Activated naive CD4-positive, alpha-beta T cell treated with anti-CD3 and anti-CD28 coated beads for 36 hours (primary cell): ENCODE measurements at regions of chr3 and their contacts with region 1.

Region 1: DNA sequence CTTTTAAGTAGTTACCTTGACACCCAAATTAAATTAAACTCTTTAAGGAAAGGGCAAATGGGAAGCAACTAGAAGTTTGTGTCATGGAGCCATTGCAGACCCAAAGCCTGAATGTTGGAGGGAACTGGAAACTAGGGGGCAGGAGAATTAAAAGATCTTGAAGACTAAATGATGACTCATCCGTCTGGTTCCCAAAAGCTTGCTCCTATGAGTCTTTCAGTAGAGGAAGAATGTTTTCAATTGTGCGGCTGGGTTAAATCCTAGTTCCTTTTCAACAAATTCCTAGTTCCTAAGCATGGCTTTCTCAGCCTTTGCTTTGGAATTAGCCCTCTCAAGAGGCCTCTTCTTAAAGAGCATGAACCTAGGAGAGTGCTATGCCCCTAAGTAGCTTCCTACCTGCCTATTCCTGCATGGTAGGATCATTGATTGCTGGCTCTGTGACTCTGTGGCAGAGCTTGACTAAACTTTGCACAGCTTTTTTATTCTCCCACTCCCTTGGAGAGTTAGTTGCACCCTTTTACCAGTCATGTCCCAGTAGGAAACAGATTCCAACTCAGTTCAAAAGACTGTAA is 17.7 kb downstream of the CLEC3B start:
- DNase-seq: no peak
- H3K4me3 Mint-ChIP-seq: no peak overlapping the region
- H3K27ac Mint-ChIP-seq: no peak overlapping the region
- H3K4me1 Mint-ChIP-seq: peaks cover 20% of the 10 kb centered on the region
- H3K27me3 Mint-ChIP-seq: peaks cover 6% of the 10 kb centered on the region

Region 2: GRCh38 chr3:44761424-44762169 is 282.2 kb before region 1 on chr3 and contains the starts of genes KIAA1143 and KIF15:
- CTCF ChIA-PET with region 1: no interaction called
- intact Hi-C with region 1: no loop called
- DNase-seq: peak; percentile 99
- H3K4me3 Mint-ChIP-seq: peak within 1 kb of the TSS; percentile 94
- H3K27ac Mint-ChIP-seq: peak within 1 kb of the TSS; percentile 86
- H3K4me1 Mint-ChIP-seq: peaks cover 26% of the 10 kb centered on the region
- H3K27me3 Mint-ChIP-seq: no peaks in the 10 kb centered on the region
- total RNA-seq, gene KIAA1143: 29.1 to 35.9 TPM
- total RNA-seq, gene KIF15: 42.1 to 45.8 TPM

Region 3: GRCh38 chr3:44772099-44772442 is 271.7 kb before region 1 on chr3:
- CTCF ChIA-PET with region 1: no interaction called
- intact Hi-C with region 1: no loop called
- DNase-seq: no peak
- H3K4me3 Mint-ChIP-seq: no peak overlapping the region
- H3K27ac Mint-ChIP-seq: no peak overlapping the region
- H3K4me1 Mint-ChIP-seq: no peaks in the 10 kb centered on the region
- H3K27me3 Mint-ChIP-seq: peaks cover 3% of the 10 kb centered on the region

Region 4: DNA sequence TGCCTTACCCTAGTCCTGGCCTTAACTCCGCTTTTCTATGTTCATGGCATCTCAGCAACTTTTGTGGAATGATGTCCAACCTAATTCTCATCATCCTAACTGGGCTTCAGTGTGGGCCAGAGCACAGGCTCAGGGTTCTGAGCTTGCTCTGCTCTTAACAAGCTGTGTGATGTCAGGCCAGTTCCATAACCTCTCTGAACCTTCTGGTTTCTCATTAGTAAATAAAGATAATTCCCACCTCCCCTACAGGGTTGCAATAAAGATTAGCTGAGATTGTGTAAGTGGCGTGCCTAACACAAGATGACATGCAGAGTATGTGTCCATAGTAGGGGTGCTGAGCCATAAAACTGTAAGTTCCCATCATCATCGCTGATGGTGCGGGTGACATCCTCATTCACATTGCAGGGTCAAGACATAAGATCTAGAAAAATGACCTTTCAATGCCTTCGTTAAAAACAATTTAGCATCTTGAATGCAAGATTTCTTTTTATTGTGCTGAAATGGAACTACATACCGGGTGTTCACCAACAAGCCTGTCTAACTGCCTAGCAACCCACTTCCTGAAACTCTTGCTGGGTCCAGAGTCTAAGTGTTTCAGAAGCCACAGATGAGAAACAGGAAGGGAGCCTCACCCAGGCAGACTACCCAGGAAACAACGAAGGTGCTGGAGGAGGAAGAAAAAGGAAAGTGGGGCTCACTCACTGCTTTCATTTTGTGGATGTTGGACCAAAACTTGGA is 66.1 kb after region 1 on chr3:
- CTCF ChIA-PET with region 1: interaction called, 8 read pairs
- intact Hi-C with region 1: loop called (anchors 5 kb)
- DNase-seq: peak; percentile 56
- H3K4me3 Mint-ChIP-seq: peak overlapping the region; percentile 47
- H3K27ac Mint-ChIP-seq: no peak overlapping the region
- H3K4me1 Mint-ChIP-seq: peaks cover 70% of the 10 kb centered on the region
- H3K27me3 Mint-ChIP-seq: no peaks in the 10 kb centered on the region

Region 5: DNA sequence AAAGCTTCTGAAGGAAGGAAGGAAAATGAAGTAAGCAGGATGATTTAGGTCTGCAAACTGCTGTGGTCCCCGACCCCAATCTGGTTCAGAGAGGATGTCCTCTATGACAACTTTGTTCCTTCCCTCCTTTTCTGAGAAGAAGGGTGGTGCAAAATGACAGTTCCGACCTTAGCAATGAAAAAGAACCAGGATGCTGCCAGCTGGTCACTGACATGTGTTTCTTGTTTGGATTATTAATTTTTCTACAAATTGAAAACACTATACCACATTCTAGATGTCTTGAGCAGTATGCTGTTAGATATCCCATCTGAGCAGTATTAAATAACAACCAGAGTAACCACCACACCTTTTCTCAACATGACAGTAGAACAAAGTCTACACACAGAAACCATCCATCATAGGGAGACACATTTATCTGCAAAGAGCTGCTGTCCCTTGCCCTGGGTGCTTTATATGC is 74.8 kb after region 1 on chr3:
- CTCF ChIA-PET with region 1: interaction called, 11 read pairs
- intact Hi-C with region 1: loop called (anchors 5 kb)
- DNase-seq: no peak
- H3K4me3 Mint-ChIP-seq: no peak overlapping the region
- H3K27ac Mint-ChIP-seq: no peak overlapping the region
- H3K4me1 Mint-ChIP-seq: peaks cover 28% of the 10 kb centered on the region
- H3K27me3 Mint-ChIP-seq: no peaks in the 10 kb centered on the region

Region 6: DNA sequence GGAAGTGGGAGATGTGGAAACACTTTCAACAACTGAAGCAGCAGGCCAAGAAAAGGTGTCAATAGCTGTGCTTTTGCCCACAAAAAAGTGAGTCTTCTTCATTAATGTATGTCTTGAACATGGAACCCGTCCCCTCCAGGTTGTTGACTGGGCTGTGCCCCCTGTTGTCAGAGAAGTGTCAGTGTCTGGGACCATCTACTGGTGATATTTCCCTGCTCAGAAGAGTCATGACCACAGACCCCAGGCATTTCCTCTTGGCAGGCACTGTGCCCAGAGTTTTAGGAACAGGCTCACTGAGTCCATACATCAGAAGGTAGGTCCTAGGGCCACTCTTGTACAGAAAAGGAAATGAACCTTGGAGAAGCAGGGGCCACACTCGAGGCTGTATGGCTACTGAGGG is 289.7 kb after region 1 on chr3:
- CTCF ChIA-PET with region 1: no interaction called
- intact Hi-C with region 1: loop called (anchors 5 kb)
- DNase-seq: no peak
- H3K4me3 Mint-ChIP-seq: no peak overlapping the region
- H3K27ac Mint-ChIP-seq: no peak overlapping the region
- H3K4me1 Mint-ChIP-seq: peaks cover 2% of the 10 kb centered on the region
- H3K27me3 Mint-ChIP-seq: peaks cover 3% of the 10 kb centered on the region